Activated CD4-positive, alpha-beta memory T cell treated with anti-CD3 and anti-CD28 coated beads, Interleukin-2, amount 10 ng/mL, durations not matched to agents 7 days and 5 days (primary cell): ENCODE measurements at regions of chr7 and their contacts with region 1.

Region 1: DNA sequence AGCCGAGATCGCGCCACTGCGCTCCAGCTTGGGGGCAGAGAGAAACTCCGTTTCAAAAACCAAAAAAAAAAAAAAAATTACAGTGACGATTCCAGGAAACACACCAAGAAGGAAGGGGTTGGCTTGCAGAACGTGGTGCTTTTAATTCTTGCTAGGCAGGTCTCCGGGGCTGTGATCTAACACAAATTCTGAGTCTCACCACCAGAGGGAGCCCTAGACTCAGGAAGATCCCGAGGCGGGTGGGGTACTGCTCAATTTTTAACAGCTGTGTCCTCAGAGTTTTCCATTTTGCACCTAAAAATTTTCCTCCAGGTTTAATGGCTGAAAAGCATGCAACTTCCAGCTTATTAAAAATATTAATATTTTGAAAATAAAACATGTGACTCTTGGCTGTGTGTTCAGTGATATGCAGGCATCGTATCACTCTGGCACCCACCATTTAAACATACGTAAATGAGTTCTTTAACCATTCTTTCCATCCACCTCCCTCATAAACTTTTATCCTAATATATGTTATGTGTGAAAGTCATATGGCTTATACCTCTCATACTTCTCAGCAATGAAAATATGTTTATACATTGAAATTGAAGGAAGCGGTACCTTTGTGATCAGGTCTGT is 26.5 kb upstream of the NUB1 start:
- DNase-seq: peak; percentile 80
- H3K4me3 Mint-ChIP-seq: peak overlapping the region; percentile 48
- H3K27ac Mint-ChIP-seq: no peak overlapping the region
- H3K4me1 Mint-ChIP-seq: peaks cover 14% of the 10 kb centered on the region
- H3K27me3 Mint-ChIP-seq: no peaks in the 10 kb centered on the region

Region 2: GRCh38 chr7:151304856-151305255 is 10.3 kb before region 1 on chr7:
- CTCF ChIA-PET with region 1: interaction called, 22 read pairs
- POLR2A ChIA-PET with region 1: no interaction called
- DNase-seq: no peak
- H3K4me3 Mint-ChIP-seq: no peak overlapping the region
- H3K27ac Mint-ChIP-seq: no peak overlapping the region
- H3K4me1 Mint-ChIP-seq: peaks cover 13% of the 10 kb centered on the region
- H3K27me3 Mint-ChIP-seq: peaks cover 18% of the 10 kb centered on the region

Region 3: DNA sequence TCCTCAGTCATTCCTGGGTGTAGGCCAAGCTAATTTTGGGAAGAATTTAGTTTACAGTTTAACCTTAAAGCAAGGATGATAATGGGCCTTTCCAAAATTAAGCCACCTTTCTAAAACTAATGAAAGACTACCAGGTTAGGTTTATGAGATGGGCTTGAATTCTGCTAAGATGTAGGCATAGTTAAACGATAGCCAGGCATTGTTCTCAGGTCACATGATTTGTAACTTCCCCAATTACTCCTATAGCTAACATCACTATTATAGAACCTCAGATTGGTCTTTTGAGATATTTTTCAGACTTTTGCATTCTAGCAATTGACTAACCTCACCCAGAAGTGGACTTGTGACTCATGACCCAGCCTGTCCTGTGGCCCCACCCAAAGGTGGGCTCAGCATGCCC is 19.5 kb after region 1 on chr7:
- CTCF ChIA-PET with region 1: interaction called, 17 read pairs
- POLR2A ChIA-PET with region 1: no interaction called
- DNase-seq: no peak
- H3K4me3 Mint-ChIP-seq: no peak overlapping the region
- H3K27ac Mint-ChIP-seq: no peak overlapping the region
- H3K4me1 Mint-ChIP-seq: peaks cover 9% of the 10 kb centered on the region
- H3K27me3 Mint-ChIP-seq: peaks cover 3% of the 10 kb centered on the region

Region 4: DNA sequence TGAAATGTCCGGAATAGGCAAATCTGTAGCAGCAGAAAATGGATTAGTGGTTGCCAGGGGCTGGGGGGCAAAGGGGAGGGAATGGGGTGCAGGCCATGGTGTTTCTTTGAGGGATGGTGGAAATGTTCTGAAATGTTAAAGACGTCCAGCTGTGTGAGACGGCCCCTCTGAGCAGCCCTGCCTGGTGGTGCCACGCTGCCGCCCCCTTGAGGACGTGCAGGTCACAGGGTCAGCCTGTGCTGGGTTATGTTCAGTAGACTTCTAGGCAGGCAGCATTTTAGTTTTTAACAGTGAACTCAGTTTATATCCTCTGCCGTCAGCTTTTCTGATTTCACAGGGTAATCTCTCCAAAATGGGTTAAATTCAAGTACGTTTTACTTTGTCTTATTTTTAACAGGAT is 35.9 kb after region 1 on chr7:
- CTCF ChIA-PET with region 1: interaction called, 143 read pairs
- POLR2A ChIA-PET with region 1: interaction called, 20 read pairs
- DNase-seq: peak; percentile 57
- H3K4me3 Mint-ChIP-seq: peak overlapping the region; percentile 69
- H3K27ac Mint-ChIP-seq: peak overlapping the region; percentile 95
- H3K4me1 Mint-ChIP-seq: peaks cover 57% of the 10 kb centered on the region
- H3K27me3 Mint-ChIP-seq: no peaks in the 10 kb centered on the region

Region 5: GRCh38 chr7:151448261-151449252 is 133.4 kb after region 1 on chr7:
- CTCF ChIA-PET with region 1: interaction called, 64 read pairs
- POLR2A ChIA-PET with region 1: interaction called, 10 read pairs
- DNase-seq: peak; percentile 80
- H3K4me3 Mint-ChIP-seq: peak overlapping the region; percentile 66
- H3K27ac Mint-ChIP-seq: no peak overlapping the region
- H3K4me1 Mint-ChIP-seq: peaks cover 11% of the 10 kb centered on the region
- H3K27me3 Mint-ChIP-seq: peaks cover 18% of the 10 kb centered on the region